Right ventricle myocardium inferior (tissue), 1 donor: ENCODE measurements at regions of chr1 and their contacts with region 1.

Region 1: GRCh38 chr1:116855191-116855619 is 54.5 kb upstream of the PTGFRN start:
- DNase-seq: peak; percentile 80
- ATAC-seq: peak; percentile 88

Region 2: GRCh38 chr1:116724765-116725375 is 130.3 kb before region 1 on chr1:
- intact Hi-C with region 1: no loop called
- DNase-seq: no peak
- ATAC-seq: no peak

Region 3: GRCh38 chr1:116817582-116818064 is 37.6 kb before region 1 on chr1:
- intact Hi-C with region 1: no loop called
- DNase-seq: no peak
- ATAC-seq: no peak

Region 4: GRCh38 chr1:117059678-117060440 is 204.7 kb after region 1 on chr1 and contains the start of gene TTF2:
- intact Hi-C with region 1: loop called (anchors 1 kb)
- DNase-seq: peak; percentile 92
- ATAC-seq: peak; percentile 100
- total RNA-seq, gene TTF2: 7.8 TPM